ENCODE measurements at regions of chr20 and their contacts with region 1.

Region 1: GRCh38 chr20:33862709-33863403 is 51.7 kb downstream of the CHMP4B start:
- H3K4me3 ChIP-seq: no peak overlapping the region
- H3K27ac ChIP-seq: no peak overlapping the region
- H3K4me1 ChIP-seq: no peaks in the 10 kb centered on the region
- CTCF ChIP-seq: peak; percentile 77

Region 2: DNA sequence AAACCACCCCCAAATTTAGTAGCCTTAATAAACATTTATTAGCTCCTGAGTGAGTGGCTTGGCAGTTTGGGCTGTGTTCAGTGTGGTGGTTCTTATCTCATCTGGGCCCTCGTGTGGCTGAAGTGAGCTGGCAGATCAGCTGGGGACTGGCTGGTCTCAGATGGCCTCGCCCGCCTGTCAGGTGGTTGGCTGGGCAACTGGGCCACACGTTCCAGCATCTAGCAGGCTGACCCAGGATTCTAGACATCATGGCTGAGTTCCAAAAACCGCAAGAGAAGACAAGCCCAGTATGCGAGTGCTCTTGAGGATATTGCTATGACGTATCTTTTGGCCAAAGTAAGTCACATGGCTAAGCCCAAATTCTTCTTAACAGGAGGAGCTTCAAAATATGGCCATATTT is 220.3 kb after region 1 on chr20:
- CTCF ChIA-PET with region 1: interaction called, 11 read pairs
- POLR2A ChIA-PET with region 1: no interaction called
- H3K4me3 ChIP-seq: no peak overlapping the region
- H3K27ac ChIP-seq: no peak overlapping the region
- H3K4me1 ChIP-seq: peaks cover 3% of the 10 kb centered on the region; the same call in 1 of the 2 replicates
- CTCF ChIP-seq: peak; percentile 34; the same call in 1 of the 2 replicates